Activated T-helper 2 cell treated with anti-CD3 and anti-CD28 coated beads, Interferon-gamma antibody, Interleukin-2, Interleukin-4, amounts not matched to agents 10 μg/mL and 5 μg/mL and 100 μg/mL, durations not matched to agents 14 hours and 24 hours and 36 hours (primary cell): ENCODE measurements at regions of chr4 and their contacts with region 1.

Region 1: DNA sequence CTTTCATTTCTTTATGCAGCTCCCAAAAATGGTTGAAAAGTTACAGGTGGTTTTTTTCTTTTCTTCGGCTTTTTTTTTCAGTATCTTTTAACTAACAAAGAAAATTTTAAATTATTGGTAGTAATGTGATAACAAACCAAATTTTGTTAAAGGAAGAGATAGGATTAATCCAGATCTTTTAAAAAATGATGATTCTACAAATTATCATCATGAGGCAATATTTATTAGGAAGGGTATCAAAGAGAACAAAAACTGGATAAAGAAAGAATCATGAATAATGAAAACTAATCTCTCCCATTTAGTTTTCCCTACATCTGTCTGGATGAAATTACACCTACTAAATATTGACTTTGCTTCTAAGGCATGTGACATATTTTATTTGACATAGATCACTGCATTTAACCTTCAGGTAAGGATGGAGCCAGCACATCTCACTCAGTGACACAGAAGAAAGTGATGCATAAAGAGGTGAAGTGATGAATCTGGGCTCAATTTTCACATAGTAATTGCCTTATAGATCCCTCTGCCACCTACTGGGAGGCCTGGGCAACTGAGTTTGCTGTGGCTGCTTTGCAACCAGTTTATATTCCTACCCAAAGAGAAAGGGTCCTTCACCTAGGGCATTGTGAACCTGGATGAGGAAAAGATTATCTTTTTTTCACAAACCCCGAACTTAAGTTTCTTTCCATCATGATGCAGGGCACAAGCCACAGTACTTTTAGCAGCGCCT is 155.6 kb downstream of the HNRNPD start:
- DNase-seq: no peak
- H3K4me3 Mint-ChIP-seq: no peak overlapping the region
- H3K27ac Mint-ChIP-seq: no peak overlapping the region
- H3K4me1 Mint-ChIP-seq: peaks cover 7% of the 10 kb centered on the region
- H3K27me3 Mint-ChIP-seq: peaks cover 19% of the 10 kb centered on the region

Region 2: GRCh38 chr4:82235346-82235745 is 17.2 kb after region 1 on chr4:
- intact Hi-C with region 1: loop called (anchors 1 kb)
- DNase-seq: no peak
- H3K4me3 Mint-ChIP-seq: no peak overlapping the region
- H3K27ac Mint-ChIP-seq: no peak overlapping the region
- H3K4me1 Mint-ChIP-seq: no peaks in the 10 kb centered on the region
- H3K27me3 Mint-ChIP-seq: peaks cover 5% of the 10 kb centered on the region